GM12878 (cell line): ENCODE measurements at regions of chr1 and their contacts with region 1.

Region 1: GRCh38 chr1:161706482-161707347 is at the start of gene FCRLA:
- DNase-seq: peak; percentile 88
- ATAC-seq: peak; percentile 85
- H3K4me3 ChIP-seq: peak within 1 kb of the TSS; percentile 81
- H3K27ac ChIP-seq: peak within 1 kb of the TSS; percentile 85
- H3K4me1 ChIP-seq: peaks cover 32% of the 10 kb centered on the region
- H3K27me3 ChIP-seq: no peaks in the 10 kb centered on the region
- CTCF ChIP-seq: no peak
- EP300 ChIP-seq: peak in 1 of 2 experiments; percentile 72; a peak in 2 of 4 replicates
- POLR2A ChIP-seq: peak; percentile 90
- RAD21 ChIP-seq: no peak
- polyA plus RNA-seq, gene FCRLA: 418 to 714 TPM

Region 2: DNA sequence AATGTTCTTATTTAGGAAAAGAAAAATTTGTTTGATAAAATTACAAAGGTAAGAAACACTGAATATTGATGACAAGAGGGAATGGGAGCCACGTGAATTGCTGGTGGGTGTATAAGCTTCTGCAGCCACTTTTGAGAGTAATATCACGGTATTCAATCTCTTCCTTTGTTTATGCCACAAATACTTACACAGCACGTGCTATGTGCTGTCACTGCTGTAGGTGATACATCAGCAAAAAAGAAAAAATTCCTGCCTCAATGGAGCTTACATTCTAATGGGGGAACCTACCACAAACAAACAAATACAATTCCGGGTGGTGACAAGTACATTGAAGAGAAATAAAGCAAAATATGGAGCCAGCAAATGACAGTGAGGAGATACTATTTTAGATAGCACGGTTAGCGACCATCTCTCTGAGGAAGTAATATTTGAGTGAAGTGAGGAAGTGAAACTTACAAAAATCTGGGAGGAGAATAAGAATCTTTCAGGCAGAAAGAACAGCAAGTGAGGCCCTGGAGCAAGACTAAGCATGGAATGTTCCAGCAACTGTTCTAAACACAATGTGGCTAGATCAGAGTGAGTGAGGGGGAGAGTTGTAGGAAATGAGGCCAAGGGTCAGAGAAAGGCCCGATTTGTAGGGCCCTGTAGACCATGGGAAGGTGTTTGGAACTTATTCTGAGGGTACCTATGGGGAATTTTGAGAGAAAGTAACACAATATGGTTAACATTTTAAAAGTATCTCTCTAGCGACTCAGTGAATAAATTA is 12.0 kb after region 1 on chr1:
- CTCF ChIA-PET with region 1: interaction called, 10 read pairs
- POLR2A ChIA-PET with region 1: interaction called, 6 read pairs
- RAD21 ChIA-PET with region 1: interaction called, 12 read pairs
- SMC1A ChIA-PET with region 1: interaction called, 49 read pairs
- in situ Hi-C with region 1: no loop called
- intact Hi-C with region 1: no loop called
- DNase-seq: no peak
- ATAC-seq: peak; percentile 82
- H3K4me3 ChIP-seq: peak overlapping the region; percentile 41; the same call in 1 of the 2 replicates
- H3K27ac ChIP-seq: peak overlapping the region; percentile 77
- H3K4me1 ChIP-seq: peaks cover 45% of the 10 kb centered on the region
- H3K27me3 ChIP-seq: no peaks in the 10 kb centered on the region
- CTCF ChIP-seq: no peak
- EP300 ChIP-seq: peak in 1 of 2 experiments; percentile 62; a peak in 1 of 4 replicates
- POLR2A ChIP-seq: no peak
- RAD21 ChIP-seq: no peak

Region 3: DNA sequence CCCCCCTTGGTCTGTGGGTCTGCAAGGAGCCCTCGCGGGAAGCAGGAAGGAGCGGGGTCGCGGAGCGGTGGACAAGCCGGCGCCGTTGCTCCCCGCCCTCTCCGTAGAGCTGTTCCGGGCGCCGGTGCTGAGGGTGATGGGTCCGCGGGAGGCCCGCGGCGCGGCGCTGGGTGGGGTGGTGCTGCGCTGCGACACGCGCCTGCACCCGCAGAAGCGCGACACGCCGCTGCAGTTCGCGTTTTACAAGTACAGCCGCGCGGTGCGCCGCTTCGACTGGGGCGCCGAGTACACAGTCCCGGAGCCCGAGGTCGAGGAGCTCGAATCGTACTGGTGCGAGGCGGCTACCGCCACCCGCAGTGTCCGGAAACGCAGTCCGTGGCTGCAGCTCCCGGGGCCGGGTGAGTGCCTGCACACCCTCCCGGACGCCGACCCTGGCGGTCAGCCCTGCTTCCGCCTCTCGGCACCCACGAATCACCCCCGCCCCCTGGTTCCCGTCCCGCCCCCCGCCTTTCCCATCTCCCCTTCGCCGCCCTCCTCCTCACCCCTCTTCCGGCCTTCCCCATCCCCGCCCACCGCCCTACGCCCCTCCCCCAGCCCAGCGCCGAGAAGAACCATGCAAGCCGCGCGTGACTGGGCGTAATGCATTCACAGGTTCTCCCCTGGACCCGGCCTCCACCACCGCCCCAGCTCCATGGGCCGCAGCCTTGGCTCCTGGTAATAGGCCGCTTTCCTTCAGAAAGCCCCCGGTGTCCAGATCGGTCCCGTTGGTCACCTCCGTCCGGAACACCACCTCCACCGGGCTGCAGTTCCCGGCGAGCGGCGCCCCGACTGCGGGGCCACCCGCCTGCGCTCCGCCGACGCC is 20.1 kb after region 1 on chr1:
- CTCF ChIA-PET with region 1: interaction called, 75 read pairs
- POLR2A ChIA-PET with region 1: interaction called, 16 read pairs
- RAD21 ChIA-PET with region 1: interaction called, 32 read pairs
- SMC1A ChIA-PET with region 1: interaction called, 45 read pairs
- in situ Hi-C with region 1: no loop called
- intact Hi-C with region 1: loop called (anchors 2 kb)
- DNase-seq: no peak
- ATAC-seq: peak; percentile 80
- H3K4me3 ChIP-seq: peak overlapping the region; percentile 92
- H3K27ac ChIP-seq: peak overlapping the region; percentile 84
- H3K4me1 ChIP-seq: peaks cover 42% of the 10 kb centered on the region
- H3K27me3 ChIP-seq: no peaks in the 10 kb centered on the region
- CTCF ChIP-seq: 0 out of 6 replicates have a peak, but pooled peaks of 1 of the 3 experiments have one; percentile 8
- EP300 ChIP-seq: no peak
- POLR2A ChIP-seq: peak; percentile 94
- RAD21 ChIP-seq: no peak